CD4-positive, alpha-beta T cell (primary cell): ENCODE measurements at regions of chr7 and their contacts with region 1.

Region 1: GRCh38 chr7:100705753-100706671 is at the start of gene POP7:
- DNase-seq: peak; percentile 95 to 99 (median 98)
- ATAC-seq: peak; percentile 93
- H3K4me3 ChIP-seq: peak within 1 kb of the TSS; percentile 100
- H3K4me3 Mint-ChIP-seq: peak within 1 kb of the TSS; percentile 98
- H3K27ac ChIP-seq: peak within 1 kb of the TSS; percentile 82 to 93
- H3K27ac Mint-ChIP-seq: peak within 1 kb of the TSS; percentile 85
- H3K4me1 ChIP-seq: peaks cover 24% of the 10 kb centered on the region
- H3K4me1 Mint-ChIP-seq: peaks cover 14% of the 10 kb centered on the region
- H3K27me3 ChIP-seq: no peaks in the 10 kb centered on the region
- H3K27me3 Mint-ChIP-seq: no peaks in the 10 kb centered on the region
- CTCF ChIP-seq: no peak
- total RNA-seq, gene POP7: 7.4 to 7.5 TPM

Region 2: DNA sequence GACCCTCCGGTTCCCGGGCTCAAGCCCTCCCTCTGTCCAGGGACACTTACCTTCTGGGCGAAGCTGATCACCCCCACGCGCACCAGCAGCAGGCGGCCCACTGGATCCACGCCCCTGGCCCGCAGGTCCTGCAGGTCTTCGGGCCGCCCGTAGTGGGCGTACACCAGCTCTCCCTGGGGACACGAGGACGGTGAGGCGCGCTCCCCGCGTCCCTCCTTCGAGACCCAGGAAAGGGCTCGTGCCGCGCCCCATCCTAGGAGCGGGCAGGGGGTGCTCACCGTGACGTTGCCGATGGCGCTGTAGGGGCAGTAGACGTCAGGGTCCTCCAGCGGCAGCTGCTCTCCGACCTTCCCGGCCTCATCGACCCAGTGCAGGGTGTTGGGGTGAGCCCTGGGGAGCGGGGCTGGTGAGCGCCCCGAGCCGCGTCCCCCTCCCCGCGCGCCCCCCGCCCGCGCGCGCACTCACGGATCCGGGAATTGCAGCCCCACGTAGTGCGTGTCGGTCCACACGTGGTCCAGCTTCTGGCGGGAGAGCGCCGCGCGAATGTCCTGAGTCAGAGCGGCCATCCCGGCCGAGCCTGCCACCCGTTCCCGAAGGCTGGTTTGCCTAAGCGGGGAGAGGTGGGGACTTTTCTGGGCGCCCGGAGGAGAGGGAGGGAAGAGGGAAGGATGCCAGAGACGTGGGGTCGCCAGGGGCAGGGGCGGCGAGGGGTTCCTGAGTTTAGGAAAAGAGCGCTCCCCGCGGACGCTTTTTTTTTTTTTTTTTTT is 72.9 kb before region 1 on chr7:
- CTCF ChIA-PET with region 1: interaction called, 12 read pairs
- POLR2A ChIA-PET with region 1: interaction called, 5 read pairs
- intact Hi-C with region 1: no loop called
- DNase-seq: peak; percentile 26 to 81 (median 47)
- ATAC-seq: peak; percentile 77
- H3K4me3 ChIP-seq: peak overlapping the region; percentile 71
- H3K4me3 Mint-ChIP-seq: peak overlapping the region; percentile 87
- H3K27ac ChIP-seq: no peak overlapping the region
- H3K27ac Mint-ChIP-seq: no peak overlapping the region
- H3K4me1 ChIP-seq: peaks cover 24% of the 10 kb centered on the region
- H3K4me1 Mint-ChIP-seq: peaks cover 10% of the 10 kb centered on the region
- H3K27me3 ChIP-seq: no peaks in the 10 kb centered on the region
- H3K27me3 Mint-ChIP-seq: no peaks in the 10 kb centered on the region
- CTCF ChIP-seq: peak; percentile 33

Region 3: DNA sequence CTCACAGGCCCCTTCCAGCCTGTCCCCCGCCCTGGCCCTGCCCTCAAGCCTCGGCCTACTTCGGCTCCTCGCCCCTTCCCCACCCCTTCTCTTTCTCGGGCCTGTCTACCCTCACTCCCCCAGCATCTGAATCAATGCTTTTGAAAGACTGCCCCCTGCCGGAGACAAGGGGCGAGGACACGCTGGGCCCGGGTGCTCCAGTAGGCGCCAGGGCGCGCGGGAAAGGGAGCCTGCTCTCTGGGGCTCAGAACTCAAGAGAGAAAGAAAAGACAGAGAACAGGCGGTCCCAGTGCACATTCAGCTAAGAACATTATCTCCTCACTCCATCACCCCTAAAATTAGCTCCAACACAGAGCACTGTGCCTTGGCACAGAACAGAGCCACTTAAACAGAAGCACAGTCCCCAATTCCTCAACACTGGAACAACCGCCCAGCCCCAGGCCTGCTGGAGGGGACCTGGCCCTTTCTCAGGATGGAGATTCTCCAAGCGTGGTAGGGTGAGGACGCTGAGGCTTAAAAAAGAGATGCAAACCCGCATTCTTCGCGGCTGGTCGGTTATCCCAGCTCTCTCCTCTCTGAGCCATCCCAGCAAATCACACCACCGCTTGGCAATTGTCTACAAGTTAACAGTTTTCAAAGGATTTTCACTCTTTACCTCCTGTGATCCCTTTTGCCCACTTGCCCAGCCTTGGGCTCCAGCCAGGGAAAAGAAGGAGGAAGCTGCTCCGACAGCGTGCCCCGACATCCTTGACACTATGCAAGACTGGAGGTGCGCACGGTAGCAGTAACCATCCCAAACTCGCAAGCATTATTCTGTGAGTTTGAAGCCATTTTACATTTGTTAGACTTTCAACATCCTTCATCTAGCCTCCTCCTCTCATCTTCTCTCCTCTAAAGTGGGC is 14.1 kb before region 1 on chr7:
- CTCF ChIA-PET with region 1: interaction called, 59 read pairs
- POLR2A ChIA-PET with region 1: interaction called, 27 read pairs
- intact Hi-C with region 1: no loop called
- DNase-seq: peak; percentile 71 to 91 (median 79)
- ATAC-seq: peak; percentile 77
- H3K4me3 ChIP-seq: peak overlapping the region; percentile 75
- H3K4me3 Mint-ChIP-seq: peak overlapping the region; percentile 97
- H3K27ac ChIP-seq: no peak overlapping the region
- H3K27ac Mint-ChIP-seq: peak overlapping the region; percentile 85
- H3K4me1 ChIP-seq: peaks cover 62% of the 10 kb centered on the region
- H3K4me1 Mint-ChIP-seq: peaks cover 34% of the 10 kb centered on the region
- H3K27me3 ChIP-seq: no peaks in the 10 kb centered on the region
- H3K27me3 Mint-ChIP-seq: no peaks in the 10 kb centered on the region
- CTCF ChIP-seq: peak; percentile 87

Region 4: GRCh38 chr7:100745184-100745583 is 39.2 kb after region 1 on chr7:
- CTCF ChIA-PET with region 1: no interaction called
- POLR2A ChIA-PET with region 1: no interaction called
- intact Hi-C with region 1: no loop called
- DNase-seq: peak in 5 of 14 experiments; percentile 2 to 44 (median 15)
- ATAC-seq: no peak
- H3K4me3 ChIP-seq: no peak overlapping the region
- H3K4me3 Mint-ChIP-seq: peak overlapping the region; percentile 51
- H3K27ac ChIP-seq: no peak overlapping the region
- H3K27ac Mint-ChIP-seq: no peak overlapping the region
- H3K4me1 ChIP-seq: no peaks in the 10 kb centered on the region
- H3K4me1 Mint-ChIP-seq: no peaks in the 10 kb centered on the region
- H3K27me3 ChIP-seq: peaks cover 4 to 9% of the 10 kb centered on the region in 2 experiments
- H3K27me3 Mint-ChIP-seq: peaks cover 33% of the 10 kb centered on the region
- CTCF ChIP-seq: no peak

Region 5: DNA sequence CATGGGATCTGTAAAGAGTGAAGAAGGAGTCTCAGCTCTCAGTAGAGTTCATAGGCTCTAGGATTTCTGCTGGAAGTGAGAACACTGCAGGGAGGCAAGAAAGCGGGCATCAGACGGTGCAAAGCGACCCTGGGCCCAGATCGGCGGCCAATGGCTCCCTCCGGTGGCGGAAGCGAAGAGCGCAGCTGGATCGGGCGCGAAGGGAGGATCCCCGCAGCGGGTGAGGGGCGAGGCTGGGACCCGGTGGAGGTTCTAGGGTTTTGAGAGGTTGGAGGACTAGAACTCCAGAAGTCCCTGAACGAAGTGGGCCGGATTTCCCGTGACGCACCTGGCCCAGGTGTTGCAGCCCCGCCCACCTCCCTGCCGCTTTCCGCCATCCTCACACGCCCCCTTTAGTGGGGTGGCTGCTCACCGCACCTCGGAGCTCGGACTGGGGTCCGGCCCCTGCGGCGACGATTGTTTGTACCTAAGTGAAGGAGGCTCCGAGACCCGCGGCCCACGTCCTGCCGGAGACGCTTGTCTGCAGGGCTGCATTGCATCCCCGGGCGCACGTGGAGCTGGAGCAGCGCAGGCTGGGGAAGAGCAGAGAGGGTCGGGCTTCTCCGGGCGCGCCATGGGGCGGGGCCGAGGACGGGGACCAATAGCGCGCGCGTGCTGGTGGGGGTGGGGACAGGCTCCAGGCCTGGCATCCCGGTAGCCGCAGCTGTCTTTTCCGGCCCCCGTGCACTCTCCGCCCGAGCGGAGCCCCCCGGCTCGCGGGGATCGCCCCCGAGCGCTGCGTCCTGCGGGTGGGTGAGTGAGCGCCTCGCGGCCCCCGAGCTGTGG is 146.2 kb after region 1 on chr7 and contains the start of gene SLC12A9:
- CTCF ChIA-PET with region 1: interaction called, 25 read pairs
- POLR2A ChIA-PET with region 1: interaction called, 20 read pairs
- intact Hi-C with region 1: loop called (anchors 1 kb)
- DNase-seq: peak; percentile 68 to 92 (median 82)
- ATAC-seq: peak; percentile 91
- H3K4me3 ChIP-seq: peak within 1 kb of the TSS; percentile 72
- H3K4me3 Mint-ChIP-seq: peak within 1 kb of the TSS; percentile 95
- H3K27ac ChIP-seq: peak within 1 kb of the TSS; percentile 36 to 62
- H3K27ac Mint-ChIP-seq: peak within 1 kb of the TSS; percentile 91
- H3K4me1 ChIP-seq: peaks cover 30% of the 10 kb centered on the region
- H3K4me1 Mint-ChIP-seq: peaks cover 23% of the 10 kb centered on the region
- H3K27me3 ChIP-seq: no peaks in the 10 kb centered on the region
- H3K27me3 Mint-ChIP-seq: no peaks in the 10 kb centered on the region
- CTCF ChIP-seq: peak; percentile 96
- total RNA-seq, gene SLC12A9: 26.3 to 28.2 TPM

Region 6: GRCh38 chr7:101058355-101058754 is 352.3 kb after region 1 on chr7:
- CTCF ChIA-PET with region 1: no interaction called
- POLR2A ChIA-PET with region 1: no interaction called
- intact Hi-C with region 1: loop called (anchors 2 to 5 kb)
- DNase-seq: peak; percentile 14 to 68 (median 35)
- ATAC-seq: no peak
- H3K4me3 ChIP-seq: no peak overlapping the region
- H3K4me3 Mint-ChIP-seq: no peak overlapping the region
- H3K27ac ChIP-seq: no peak overlapping the region
- H3K27ac Mint-ChIP-seq: no peak overlapping the region
- H3K4me1 ChIP-seq: peaks cover 3% of the 10 kb centered on the region
- H3K4me1 Mint-ChIP-seq: peaks cover 4% of the 10 kb centered on the region
- H3K27me3 ChIP-seq: peaks cover 29 to 31% of the 10 kb centered on the region in 2 experiments
- H3K27me3 Mint-ChIP-seq: peaks cover 69% of the 10 kb centered on the region
- CTCF ChIP-seq: no peak